HEK293 (cell line): ENCODE measurements at regions of chr7 and their contacts with region 1.

Region 1: DNA sequence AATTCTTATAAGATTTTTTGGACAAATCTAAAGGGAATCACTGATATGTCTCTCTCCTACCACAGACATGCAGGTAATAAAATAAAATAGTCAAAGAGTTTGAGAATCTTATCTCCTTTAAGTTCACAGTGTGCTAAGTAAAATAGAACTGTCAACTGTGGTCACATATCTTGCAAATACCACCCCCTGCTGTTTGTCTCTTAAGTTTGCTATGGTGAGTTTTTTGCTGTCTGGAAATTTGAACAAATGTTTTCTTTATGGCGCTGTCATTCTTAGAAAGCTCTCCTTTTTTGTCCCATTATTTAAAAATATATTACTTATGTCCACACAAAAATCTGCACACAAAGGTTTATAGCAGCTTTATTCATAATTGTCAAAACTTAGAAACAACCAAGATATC is 19.6 kb downstream of the GIMAP5 start:
- H3K4me3 ChIP-seq: no peak overlapping the region
- H3K27ac ChIP-seq: no peak overlapping the region
- H3K4me1 ChIP-seq: no peaks in the 10 kb centered on the region
- CTCF ChIP-seq: no peak

Region 2: GRCh38 chr7:150448789-150449147 is 308.1 kb before region 1 on chr7:
- CTCF ChIA-PET with region 1: interaction called, 10 read pairs
- POLR2A ChIA-PET with region 1: no interaction called
- H3K4me3 ChIP-seq: no peak overlapping the region
- H3K27ac ChIP-seq: no peak overlapping the region
- H3K4me1 ChIP-seq: no peaks in the 10 kb centered on the region
- CTCF ChIP-seq: peak; percentile 67

Region 3: GRCh38 chr7:150778738-150779301 is 22.0 kb after region 1 on chr7:
- CTCF ChIA-PET with region 1: interaction called, 11 read pairs
- POLR2A ChIA-PET with region 1: no interaction called
- H3K4me3 ChIP-seq: no peak overlapping the region
- H3K27ac ChIP-seq: no peak overlapping the region
- H3K4me1 ChIP-seq: no peaks in the 10 kb centered on the region
- CTCF ChIP-seq: peak; percentile 52